ENCODE measurements at regions of chr4 and their contacts with region 1.

Region 1: DNA sequence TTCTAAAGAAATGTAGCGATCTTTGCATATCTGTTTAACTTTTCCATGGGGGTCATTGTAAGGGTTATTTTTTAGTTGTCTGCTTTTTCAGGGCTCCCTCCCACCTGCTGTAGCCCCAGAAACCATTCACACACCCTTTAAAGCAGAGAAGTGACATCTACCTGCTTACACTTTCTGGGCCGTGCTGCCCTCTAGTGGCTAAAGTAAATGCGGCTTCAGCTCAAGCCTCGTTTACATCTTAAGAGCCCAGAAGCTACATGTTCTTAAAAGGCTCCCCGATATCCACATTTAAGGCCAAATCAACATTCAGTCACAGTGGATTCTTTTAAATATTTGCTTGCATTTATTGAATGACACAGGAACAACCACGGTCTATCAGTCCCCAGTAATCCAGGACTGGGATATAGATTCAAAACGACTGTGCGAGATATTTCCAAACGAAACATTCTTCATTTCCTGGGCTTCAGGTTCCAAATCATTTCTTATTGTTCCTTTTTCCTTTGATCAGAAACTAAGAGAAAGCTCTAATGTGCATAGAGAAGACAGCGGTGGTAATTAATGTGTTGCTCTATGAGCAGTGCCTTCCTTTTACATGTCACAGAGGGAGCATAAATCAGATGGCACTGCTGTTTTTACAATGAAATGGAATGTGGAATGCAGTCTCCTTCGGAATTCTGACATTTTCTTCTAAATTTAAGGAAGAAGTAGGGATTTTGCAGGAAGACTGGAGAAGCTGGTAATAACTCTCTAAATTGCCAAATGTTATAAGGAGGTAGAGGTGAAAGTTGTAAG is 119.9 kb downstream of the RASGEF1B start:
- DNase-seq: peak; percentile 81
- H3K4me3 Mint-ChIP-seq: no peak overlapping the region
- H3K27ac Mint-ChIP-seq: no peak overlapping the region
- H3K4me1 Mint-ChIP-seq: no peaks in the 10 kb centered on the region
- H3K27me3 Mint-ChIP-seq: no peaks in the 10 kb centered on the region
- CTCF ChIP-seq: peak; percentile 74

Region 2: DNA sequence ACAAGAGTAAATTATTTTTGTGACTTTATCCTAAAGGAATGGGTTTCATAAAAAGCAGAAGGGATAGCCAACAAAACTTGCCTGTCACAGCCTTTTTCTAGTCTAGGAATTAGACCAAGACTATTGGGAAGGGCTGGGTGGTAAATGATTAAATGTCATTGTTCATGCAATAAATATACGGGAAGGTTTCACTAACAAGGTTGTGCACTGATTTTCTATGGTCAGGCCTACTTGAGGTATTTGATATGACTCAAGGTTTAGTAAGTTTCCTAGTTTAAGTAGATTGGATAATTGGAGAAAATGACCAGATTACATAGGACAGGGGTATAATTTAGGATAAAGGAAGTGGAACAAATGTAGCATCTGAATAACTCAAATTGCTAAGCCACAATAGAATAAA is 570.4 kb before region 1 on chr4:
- CTCF ChIA-PET with region 1: no interaction called
- POLR2A ChIA-PET with region 1: no interaction called
- intact Hi-C with region 1: no loop called
- DNase-seq: no peak
- H3K4me3 Mint-ChIP-seq: no peak overlapping the region
- H3K27ac Mint-ChIP-seq: no peak overlapping the region
- H3K4me1 Mint-ChIP-seq: no peaks in the 10 kb centered on the region
- H3K27me3 Mint-ChIP-seq: no peaks in the 10 kb centered on the region
- CTCF ChIP-seq: no peak

Region 3: DNA sequence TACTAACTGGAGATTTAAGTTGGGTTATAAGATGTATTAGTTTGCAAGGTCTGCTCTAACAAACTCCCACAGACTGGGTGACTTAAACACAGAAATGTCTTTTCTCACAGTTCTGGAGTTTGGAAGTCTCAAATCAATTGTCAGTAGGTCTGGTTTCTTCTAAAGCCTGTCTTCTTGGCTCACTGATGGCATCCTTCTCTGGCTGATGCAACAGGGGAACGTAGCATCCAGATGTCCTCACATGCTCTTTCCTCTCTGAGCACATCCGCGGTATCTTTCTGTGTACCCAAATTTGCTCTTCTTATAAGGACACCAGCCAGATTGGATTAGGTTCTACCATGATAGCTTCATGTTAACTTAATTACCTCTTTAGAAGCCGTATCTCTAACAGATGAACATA is 384.5 kb before region 1 on chr4:
- CTCF ChIA-PET with region 1: no interaction called
- POLR2A ChIA-PET with region 1: no interaction called
- intact Hi-C with region 1: no loop called
- DNase-seq: no peak
- H3K4me3 Mint-ChIP-seq: no peak overlapping the region
- H3K27ac Mint-ChIP-seq: no peak overlapping the region
- H3K4me1 Mint-ChIP-seq: peaks cover 5% of the 10 kb centered on the region
- H3K27me3 Mint-ChIP-seq: no peaks in the 10 kb centered on the region
- CTCF ChIP-seq: no peak

Region 4: DNA sequence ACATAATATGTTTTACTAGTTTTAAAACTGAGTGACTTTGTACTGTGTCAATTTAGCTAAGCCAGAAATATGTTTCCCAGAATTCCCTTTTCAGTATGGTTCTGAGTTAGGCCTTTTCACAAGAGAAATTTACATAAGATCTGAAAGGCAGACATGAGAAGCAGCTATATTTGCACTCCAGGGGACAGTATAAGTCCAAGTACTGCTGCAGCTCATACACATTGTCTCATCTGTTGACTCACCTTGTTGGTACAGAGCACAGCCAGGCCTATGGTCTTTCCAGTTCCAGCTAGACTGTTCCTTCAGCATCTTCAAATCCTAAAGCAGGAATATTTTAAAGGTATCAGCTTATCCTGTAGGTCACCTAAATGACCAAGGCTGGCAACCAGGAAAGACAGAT is 267.8 kb before region 1 on chr4:
- CTCF ChIA-PET with region 1: interaction called, 54 read pairs
- POLR2A ChIA-PET with region 1: interaction called, 3 read pairs
- intact Hi-C with region 1: loop called (anchors 1 kb)
- DNase-seq: peak; percentile 59
- H3K4me3 Mint-ChIP-seq: no peak overlapping the region
- H3K27ac Mint-ChIP-seq: no peak overlapping the region
- H3K4me1 Mint-ChIP-seq: peaks cover 10% of the 10 kb centered on the region
- H3K27me3 Mint-ChIP-seq: no peaks in the 10 kb centered on the region
- CTCF ChIP-seq: peak; percentile 47

Region 5: DNA sequence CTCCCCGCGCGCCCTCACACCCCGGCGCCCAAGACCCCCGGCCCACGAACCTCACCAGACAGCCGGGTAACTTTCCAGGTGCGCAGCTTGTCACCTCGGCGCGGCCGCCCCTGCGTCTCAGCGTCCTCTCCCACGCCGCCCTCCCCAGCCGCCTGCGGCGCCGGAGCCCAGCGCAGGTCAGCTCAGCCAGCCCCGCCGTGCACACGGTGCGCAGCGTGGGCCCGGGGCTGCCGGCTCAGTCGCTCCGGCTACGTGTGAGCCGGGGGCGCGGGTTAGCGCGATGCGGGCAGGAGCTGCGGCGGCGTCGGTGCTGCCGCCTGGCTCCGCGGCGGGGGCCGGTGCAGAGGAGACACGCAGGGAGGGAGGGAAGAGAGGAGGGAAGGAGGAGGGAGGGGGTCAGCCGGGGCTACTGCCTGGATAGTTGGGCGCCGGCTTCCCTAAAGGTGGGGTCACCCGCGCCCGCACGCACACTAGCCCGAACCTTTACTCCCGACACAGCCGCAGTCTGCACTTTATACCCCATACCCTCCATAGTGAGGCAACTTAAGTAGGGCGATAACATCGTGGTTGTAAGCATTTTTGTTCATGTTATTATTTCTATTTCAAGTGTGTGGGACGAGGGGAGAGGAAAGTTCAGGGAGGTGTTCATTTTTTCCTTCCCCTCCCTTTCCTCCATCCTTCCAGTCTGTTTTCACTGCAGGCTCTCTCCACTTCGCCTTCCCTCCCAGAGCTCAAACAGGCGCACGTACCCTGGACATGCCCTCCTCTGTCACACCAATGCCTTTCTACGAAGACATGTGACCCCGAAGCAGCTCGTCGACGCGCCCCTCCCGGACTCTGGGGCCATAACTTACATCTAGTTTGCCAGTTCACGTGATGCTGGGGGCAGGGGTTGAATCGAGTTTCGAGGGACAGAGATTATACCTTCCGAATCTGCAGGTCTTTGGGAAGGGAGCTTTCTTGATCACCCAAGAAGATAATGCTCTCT is 136.7 kb before region 1 on chr4 and contains the start of gene PRKG2:
- CTCF ChIA-PET with region 1: interaction called, 3 read pairs
- POLR2A ChIA-PET with region 1: interaction called, 3 read pairs
- intact Hi-C with region 1: loop called (anchors 5 kb)
- DNase-seq: no peak
- H3K4me3 Mint-ChIP-seq: peak within 1 kb of the TSS; percentile 69
- H3K27ac Mint-ChIP-seq: no peak within 1 kb of the TSS
- H3K4me1 Mint-ChIP-seq: no peaks in the 10 kb centered on the region
- H3K27me3 Mint-ChIP-seq: no peaks in the 10 kb centered on the region
- CTCF ChIP-seq: no peak
- total RNA-seq, gene PRKG2: 0.23 TPM in 1 of 2 replicates, not detected in the other

Region 6: GRCh38 chr4:81255524-81255923 is 96.3 kb before region 1 on chr4:
- CTCF ChIA-PET with region 1: interaction called, 10 read pairs
- POLR2A ChIA-PET with region 1: no interaction called
- intact Hi-C with region 1: no loop called
- DNase-seq: peak; percentile 47
- H3K4me3 Mint-ChIP-seq: no peak overlapping the region
- H3K27ac Mint-ChIP-seq: no peak overlapping the region
- H3K4me1 Mint-ChIP-seq: peaks cover 16% of the 10 kb centered on the region
- H3K27me3 Mint-ChIP-seq: no peaks in the 10 kb centered on the region
- CTCF ChIP-seq: no peak

Region 7: DNA sequence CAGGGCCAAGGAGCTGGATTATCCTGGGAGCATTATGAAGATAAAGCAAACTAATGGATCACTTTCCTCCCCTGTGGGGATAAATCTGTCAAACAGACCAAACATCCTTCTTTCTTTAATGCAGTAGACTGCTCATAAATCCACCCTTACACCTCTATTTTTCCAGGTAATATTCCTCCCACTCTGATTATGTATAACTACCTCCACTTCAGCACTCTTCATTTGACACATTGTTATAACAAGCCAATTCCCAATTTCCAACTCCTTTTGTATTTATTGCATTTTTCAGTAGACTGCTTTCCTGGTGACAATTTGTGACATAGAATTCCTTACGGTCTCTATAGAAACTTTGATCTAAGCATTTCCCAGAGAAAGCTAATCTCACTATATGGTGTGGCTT is 21.8 kb before region 1 on chr4:
- CTCF ChIA-PET with region 1: interaction called, 16 read pairs
- POLR2A ChIA-PET with region 1: no interaction called
- intact Hi-C with region 1: no loop called
- DNase-seq: no peak
- H3K4me3 Mint-ChIP-seq: no peak overlapping the region
- H3K27ac Mint-ChIP-seq: peak overlapping the region; percentile 78
- H3K4me1 Mint-ChIP-seq: no peaks in the 10 kb centered on the region
- H3K27me3 Mint-ChIP-seq: no peaks in the 10 kb centered on the region
- CTCF ChIP-seq: no peak

Region 8: GRCh38 chr4:81335122-81335912 is 16.5 kb before region 1 on chr4:
- CTCF ChIA-PET with region 1: interaction called, 16 read pairs
- POLR2A ChIA-PET with region 1: no interaction called
- intact Hi-C with region 1: no loop called
- DNase-seq: no peak
- H3K4me3 Mint-ChIP-seq: no peak overlapping the region
- H3K27ac Mint-ChIP-seq: no peak overlapping the region
- H3K4me1 Mint-ChIP-seq: no peaks in the 10 kb centered on the region
- H3K27me3 Mint-ChIP-seq: no peaks in the 10 kb centered on the region
- CTCF ChIP-seq: no peak

Region 9: GRCh38 chr4:81814987-81815541 is 463.2 kb after region 1 on chr4:
- CTCF ChIA-PET with region 1: no interaction called
- POLR2A ChIA-PET with region 1: no interaction called
- intact Hi-C with region 1: no loop called
- DNase-seq: no peak
- H3K4me3 Mint-ChIP-seq: no peak overlapping the region
- H3K27ac Mint-ChIP-seq: no peak overlapping the region
- H3K4me1 Mint-ChIP-seq: no peaks in the 10 kb centered on the region
- H3K27me3 Mint-ChIP-seq: no peaks in the 10 kb centered on the region
- CTCF ChIP-seq: no peak

Measured in MCF 10A (cell line).